ENCODE measurements at regions of chr14 and their contacts with region 1.

Region 1: GRCh38 chr14:60349663-60350365 is 100.8 kb downstream of the PPM1A start:
- DNase-seq: peak; percentile 62
- H3K4me3 ChIP-seq: no peak overlapping the region
- H3K27ac ChIP-seq: no peak overlapping the region
- H3K4me1 ChIP-seq: no peaks in the 10 kb centered on the region
- H3K27me3 ChIP-seq: no peaks in the 10 kb centered on the region
- CTCF ChIP-seq: peak; percentile 10 to 72 (median 60)
- POLR2A ChIP-seq: no peak

Region 2: DNA sequence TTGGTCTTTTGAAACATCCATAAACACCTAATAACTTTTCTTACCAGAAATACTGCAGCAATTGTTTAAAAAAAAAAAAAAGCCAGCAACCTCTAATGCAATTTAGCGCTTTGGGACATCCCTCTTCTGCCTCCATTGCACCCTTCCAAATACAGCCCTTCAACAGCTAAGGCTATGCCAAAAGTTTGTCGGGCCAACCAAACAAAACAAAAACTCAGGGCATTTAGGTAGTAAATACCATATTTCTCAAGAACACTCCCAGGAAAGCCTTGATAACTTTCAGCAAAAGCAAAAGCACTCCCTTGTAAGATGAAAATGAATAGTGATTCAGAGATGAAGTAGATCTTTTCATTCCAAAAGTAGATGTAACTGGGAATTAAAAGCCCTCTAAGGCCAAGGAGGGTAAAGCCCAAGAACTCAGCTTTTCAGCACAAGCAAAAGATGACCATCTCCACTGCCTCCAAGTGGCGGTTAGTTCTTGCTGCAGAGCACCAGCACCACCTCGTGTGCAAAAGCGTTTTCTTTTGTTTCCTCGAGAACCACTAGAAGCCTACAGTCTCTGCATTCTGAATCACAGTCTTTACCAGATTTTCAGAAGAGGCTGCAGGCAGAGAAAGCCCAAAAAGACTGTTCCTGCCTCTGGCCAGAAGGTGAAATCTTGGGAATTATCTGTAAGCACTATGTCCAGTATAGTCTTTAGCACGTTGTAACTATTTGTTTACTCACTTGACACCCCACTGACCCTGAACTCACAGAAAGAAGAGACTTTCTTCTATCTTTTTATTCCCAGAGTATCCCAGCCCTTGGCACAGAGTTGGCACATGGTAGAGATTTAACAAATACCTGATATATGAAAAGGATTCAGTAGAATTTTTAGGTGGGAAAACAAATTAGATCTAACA is 212.3 kb after region 1 on chr14:
- intact Hi-C with region 1: loop called (anchors 2 kb)
- DNase-seq: peak; percentile 14
- H3K4me3 ChIP-seq: no peak overlapping the region
- H3K27ac ChIP-seq: no peak overlapping the region
- H3K4me1 ChIP-seq: no peaks in the 10 kb centered on the region
- H3K27me3 ChIP-seq: no peaks in the 10 kb centered on the region
- CTCF ChIP-seq: peak in 3 of 4 experiments; percentile 29 to 53 (median 45)
- POLR2A ChIP-seq: no peak

Region 3: DNA sequence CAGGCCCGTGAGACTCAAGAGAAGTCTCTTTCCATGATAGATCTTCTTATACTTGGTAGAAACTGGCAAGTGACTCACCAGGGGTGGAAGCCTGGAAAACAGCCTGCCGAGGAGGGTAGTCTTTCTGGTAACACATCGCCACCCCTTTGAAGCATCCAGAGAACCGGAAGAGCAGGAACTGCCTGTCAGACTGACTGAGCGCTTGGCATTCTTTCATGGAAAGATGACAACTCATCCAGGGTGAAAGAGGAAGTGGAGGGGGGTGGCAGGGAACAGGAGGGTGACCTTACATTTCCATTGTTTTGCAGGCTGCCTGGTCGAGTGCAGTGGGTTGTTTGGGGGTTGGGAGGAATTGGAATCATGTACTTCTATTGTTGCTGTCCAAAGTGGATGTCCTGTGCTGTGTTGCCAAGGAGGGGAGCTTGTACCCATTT is 1006.1 kb after region 1 on chr14:
- intact Hi-C with region 1: no loop called
- DNase-seq: peak; percentile 79
- H3K4me3 ChIP-seq: no peak overlapping the region
- H3K27ac ChIP-seq: peak overlapping the region; percentile 26 to 54
- H3K4me1 ChIP-seq: peaks cover under 1% of the 10 kb centered on the region
- H3K27me3 ChIP-seq: no peaks in the 10 kb centered on the region
- CTCF ChIP-seq: no peak
- POLR2A ChIP-seq: no peak

Measured in prostate gland (tissue), 2 donors.